Activated CD4-positive, alpha-beta T cell treated with anti-CD3 and anti-CD28 coated beads, Interleukin-2, amount 10 ng/mL, durations not matched to agents 24 days and 14 days (primary cell): ENCODE measurements at regions of chr1 and their contacts with region 1.

Region 1: GRCh38 chr1:107782217-107782845 is 182.6 kb downstream of the VAV3 start:
- DNase-seq: peak; percentile 86
- H3K4me3 Mint-ChIP-seq: no peak overlapping the region
- H3K27ac Mint-ChIP-seq: no peak overlapping the region
- H3K4me1 Mint-ChIP-seq: peaks cover 22% of the 10 kb centered on the region
- H3K27me3 Mint-ChIP-seq: no peaks in the 10 kb centered on the region

Region 2: DNA sequence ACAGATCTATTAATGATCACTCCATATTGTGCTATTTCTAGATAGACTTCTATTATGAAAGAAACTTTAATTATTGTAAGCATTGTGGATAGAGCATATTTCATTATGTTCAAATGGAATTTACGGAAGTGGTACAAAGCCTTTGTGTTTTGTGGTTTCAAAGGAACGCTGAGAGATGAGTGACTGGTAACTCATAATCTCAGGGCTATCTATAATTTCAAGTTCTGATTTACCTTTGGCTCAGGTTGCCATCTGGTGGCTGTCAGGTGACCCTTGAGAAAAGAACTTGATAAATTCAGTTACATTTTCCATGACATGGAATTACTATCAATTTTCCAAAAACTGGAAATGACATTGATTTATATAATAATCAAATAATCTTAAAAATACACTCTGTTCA is 629.3 kb before region 1 on chr1:
- intact Hi-C with region 1: no loop called
- DNase-seq: no peak
- H3K4me3 Mint-ChIP-seq: no peak overlapping the region
- H3K27ac Mint-ChIP-seq: no peak overlapping the region
- H3K4me1 Mint-ChIP-seq: no peaks in the 10 kb centered on the region
- H3K27me3 Mint-ChIP-seq: no peaks in the 10 kb centered on the region

Region 3: DNA sequence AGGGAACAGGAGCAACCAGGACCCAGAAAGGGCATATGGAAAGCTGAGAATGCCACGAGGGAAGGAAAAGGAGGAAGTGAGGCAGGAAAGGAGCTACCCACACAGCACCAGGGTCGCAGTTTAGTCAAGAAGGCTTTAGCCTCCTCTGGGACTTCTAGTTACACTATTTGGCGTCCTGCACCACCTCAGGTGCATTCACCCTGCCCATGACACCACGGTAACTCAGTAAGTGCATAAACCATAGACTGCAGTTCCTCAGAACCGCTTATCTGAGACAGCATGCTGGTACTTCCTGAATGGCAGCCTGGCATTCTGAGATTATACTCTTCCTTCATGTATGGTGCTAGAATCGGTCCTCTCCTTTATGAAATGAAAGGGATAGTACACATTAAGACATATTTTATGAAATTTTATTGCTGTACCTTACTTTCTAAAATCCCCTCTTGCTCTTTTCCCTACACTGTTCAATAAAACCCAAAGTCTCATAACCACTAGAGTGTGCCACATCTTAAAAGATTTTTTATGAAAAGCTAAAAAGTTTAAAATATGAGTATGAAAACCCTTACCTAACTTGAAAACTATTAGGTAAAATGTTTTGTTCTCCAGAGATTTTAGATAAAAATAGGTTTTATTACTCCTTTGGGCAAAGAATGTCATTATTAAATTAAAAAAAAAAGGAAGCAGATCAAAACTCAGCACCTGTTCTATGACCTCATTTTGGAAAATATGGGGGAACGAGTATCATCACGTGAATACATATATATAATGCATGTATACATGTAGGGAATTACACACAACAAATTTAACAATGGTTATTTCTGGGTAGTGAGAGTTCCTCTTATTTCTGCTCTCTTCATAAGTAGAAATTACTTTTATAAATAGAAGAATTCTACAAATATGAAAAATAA is 115.4 kb after region 1 on chr1:
- intact Hi-C with region 1: loop called (anchors 5 kb)
- DNase-seq: no peak
- H3K4me3 Mint-ChIP-seq: no peak overlapping the region
- H3K27ac Mint-ChIP-seq: no peak overlapping the region
- H3K4me1 Mint-ChIP-seq: peaks cover 14% of the 10 kb centered on the region
- H3K27me3 Mint-ChIP-seq: no peaks in the 10 kb centered on the region

Region 4: DNA sequence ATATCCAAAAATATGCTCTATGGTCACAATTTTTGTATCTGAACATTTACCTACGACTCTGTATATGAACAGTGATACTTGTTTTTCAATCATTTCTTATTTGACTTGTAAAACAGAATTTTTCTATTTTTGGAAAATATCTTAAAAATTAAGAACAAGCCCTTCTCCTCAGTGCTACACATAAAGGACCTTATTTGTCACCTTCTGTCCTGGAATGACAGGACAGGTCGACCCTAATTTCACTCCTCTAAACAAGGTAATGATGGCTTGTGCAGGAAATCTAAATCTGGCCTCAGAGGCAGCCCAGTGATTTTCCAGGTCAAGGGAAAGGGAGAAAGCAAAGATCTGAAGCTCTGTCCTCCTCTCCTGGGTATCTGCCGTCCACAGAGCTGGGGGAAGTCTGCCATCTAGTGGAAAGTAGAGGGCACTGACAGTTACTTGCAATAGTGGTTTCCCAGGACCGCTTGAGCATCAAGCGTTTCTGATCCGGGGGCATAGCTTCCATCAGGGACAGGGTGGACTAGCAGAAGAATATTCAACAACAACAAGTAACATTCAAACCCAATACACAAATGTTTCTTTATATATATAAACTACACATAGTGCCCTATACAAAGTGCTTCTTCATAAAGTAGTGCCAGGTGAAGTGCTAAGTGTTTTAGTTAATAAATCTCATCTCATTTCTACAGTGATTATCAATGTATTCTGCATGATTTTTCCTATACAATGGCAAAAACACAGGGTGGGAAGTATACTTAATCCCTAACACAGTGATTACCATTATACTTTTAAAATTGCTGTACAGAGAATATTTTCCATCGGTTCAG is 343.2 kb after region 1 on chr1:
- intact Hi-C with region 1: loop called (anchors 1 kb)
- DNase-seq: peak; percentile 89
- H3K4me3 Mint-ChIP-seq: no peak overlapping the region
- H3K27ac Mint-ChIP-seq: no peak overlapping the region
- H3K4me1 Mint-ChIP-seq: no peaks in the 10 kb centered on the region
- H3K27me3 Mint-ChIP-seq: no peaks in the 10 kb centered on the region